ENCODE measurements at regions of chr5 and their contacts with region 1.

Region 1: GRCh38 chr5:55994574-55995333 is at the start of gene IL6ST:
- DNase-seq: peak; percentile 90 to 97 (median 95)
- ATAC-seq: peak; percentile 93
- H3K4me3 ChIP-seq: peak within 1 kb of the TSS; percentile 87 to 89
- H3K4me3 Mint-ChIP-seq: peak within 1 kb of the TSS; percentile 99
- H3K27ac ChIP-seq: peak within 1 kb of the TSS; percentile 93
- H3K27ac Mint-ChIP-seq: peak within 1 kb of the TSS; percentile 98
- H3K4me1 ChIP-seq: peaks cover 26% of the 10 kb centered on the region
- H3K4me1 Mint-ChIP-seq: peaks cover 54% of the 10 kb centered on the region
- H3K27me3 ChIP-seq: no peaks in the 10 kb centered on the region
- H3K27me3 Mint-ChIP-seq: no peaks in the 10 kb centered on the region
- CTCF ChIP-seq: no peak
- total RNA-seq, gene IL6ST: 201 to 214 TPM

Region 2: DNA sequence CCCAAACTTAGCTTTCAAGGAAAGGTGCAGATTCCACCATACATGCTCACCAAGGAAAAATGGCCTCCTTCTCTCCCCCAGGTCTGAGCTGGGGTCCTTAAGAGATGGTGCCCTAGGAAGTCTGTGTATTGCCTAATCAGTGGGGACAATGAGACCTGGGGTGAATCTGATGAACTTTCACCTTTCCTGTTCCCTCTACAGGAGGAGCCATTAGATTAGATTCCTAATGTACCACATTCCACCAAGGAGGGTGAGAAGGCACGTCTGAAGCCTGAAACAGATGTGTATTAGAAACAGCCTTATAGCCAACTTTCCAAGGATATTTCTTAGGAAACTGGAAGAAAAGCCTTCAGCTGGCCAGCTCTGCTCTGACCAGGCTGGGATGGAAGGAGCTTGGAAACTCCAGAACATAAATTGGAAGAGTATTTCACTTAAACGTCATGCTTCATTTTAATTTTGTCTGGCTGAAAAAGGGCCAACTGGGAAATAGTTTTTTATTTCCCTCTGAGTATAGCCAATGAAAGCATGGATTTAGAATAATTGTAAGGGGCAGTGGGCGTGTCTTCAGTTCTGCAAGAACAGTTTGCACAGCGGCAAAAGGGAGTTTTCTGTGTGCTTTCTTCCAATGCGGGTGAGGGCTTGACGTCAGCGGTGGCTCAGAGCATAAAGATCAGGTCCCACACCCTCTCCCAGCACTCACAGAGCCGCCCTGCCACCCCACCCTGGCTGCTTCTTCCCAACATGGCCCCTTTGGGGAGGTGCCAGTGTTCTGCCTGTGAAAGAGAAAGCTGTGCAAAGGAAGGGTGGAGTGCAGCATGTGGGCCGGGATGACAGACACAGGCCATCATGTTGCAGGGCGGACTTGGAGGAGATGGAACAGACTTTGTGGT is 1220.2 kb before region 1 on chr5:
- CTCF ChIA-PET with region 1: no interaction called
- POLR2A ChIA-PET with region 1: no interaction called
- intact Hi-C with region 1: no loop called
- DNase-seq: no peak
- ATAC-seq: no peak
- H3K4me3 ChIP-seq: no peak overlapping the region
- H3K4me3 Mint-ChIP-seq: no peak overlapping the region
- H3K27ac ChIP-seq: no peak overlapping the region
- H3K27ac Mint-ChIP-seq: no peak overlapping the region
- H3K4me1 ChIP-seq: no peaks in the 10 kb centered on the region
- H3K4me1 Mint-ChIP-seq: no peaks in the 10 kb centered on the region
- H3K27me3 ChIP-seq: no peaks in the 10 kb centered on the region
- H3K27me3 Mint-ChIP-seq: peaks cover 5% of the 10 kb centered on the region
- CTCF ChIP-seq: no peak

Region 3: GRCh38 chr5:55052383-55052931 is 942.3 kb before region 1 on chr5:
- CTCF ChIA-PET with region 1: no interaction called
- POLR2A ChIA-PET with region 1: no interaction called
- intact Hi-C with region 1: no loop called
- DNase-seq: no peak
- ATAC-seq: no peak
- H3K4me3 ChIP-seq: no peak overlapping the region
- H3K4me3 Mint-ChIP-seq: no peak overlapping the region
- H3K27ac ChIP-seq: no peak overlapping the region
- H3K27ac Mint-ChIP-seq: no peak overlapping the region
- H3K4me1 ChIP-seq: no peaks in the 10 kb centered on the region
- H3K4me1 Mint-ChIP-seq: no peaks in the 10 kb centered on the region
- H3K27me3 ChIP-seq: no peaks in the 10 kb centered on the region
- H3K27me3 Mint-ChIP-seq: no peaks in the 10 kb centered on the region
- CTCF ChIP-seq: no peak

Region 4: DNA sequence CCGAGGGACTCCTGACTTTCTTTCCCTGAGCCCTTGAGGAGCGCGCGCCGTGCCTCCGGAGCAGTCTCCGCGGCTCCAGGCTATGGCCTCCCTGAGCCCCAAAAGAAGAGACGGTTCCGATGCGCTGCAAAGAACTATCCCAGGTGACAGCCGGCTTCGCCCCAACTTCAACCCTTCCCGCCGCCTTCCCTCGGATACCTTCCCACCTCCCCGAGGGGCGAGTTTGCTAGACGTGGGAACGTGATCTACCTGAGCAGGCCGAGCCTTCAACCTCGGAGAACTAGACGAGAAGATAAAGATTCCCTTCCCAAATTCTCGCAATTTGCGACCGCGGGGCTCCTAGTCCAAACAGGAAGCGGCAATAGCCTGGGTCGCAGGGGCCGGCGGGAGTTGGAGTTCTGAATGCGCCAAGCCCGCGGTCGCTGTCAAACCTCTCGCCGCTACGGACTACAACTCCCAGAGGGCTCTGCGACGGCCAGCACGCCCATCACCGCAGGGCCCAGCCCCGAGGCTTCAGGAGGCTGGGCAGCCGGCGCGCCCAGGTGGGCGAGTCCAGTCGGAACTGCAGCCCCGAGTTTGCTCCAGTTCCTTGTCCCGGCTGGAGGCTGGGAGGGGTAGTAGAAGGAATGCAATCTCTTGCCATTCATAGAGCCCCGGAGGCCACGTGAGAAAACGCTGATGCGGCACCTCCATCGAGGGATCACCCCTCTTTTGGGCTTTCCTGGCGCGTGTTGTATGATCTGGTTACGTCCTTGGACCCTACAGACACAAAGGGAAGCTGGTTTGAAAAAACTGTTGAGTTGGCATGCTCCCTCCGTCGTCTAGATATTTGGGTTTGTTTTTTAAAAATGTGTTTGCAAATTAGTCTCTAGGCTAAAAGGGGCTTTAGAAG is 282.5 kb before region 1 on chr5 and contains the start of gene SLC38A9:
- CTCF ChIA-PET with region 1: no interaction called
- POLR2A ChIA-PET with region 1: no interaction called
- intact Hi-C with region 1: loop called in 1 of 2 experiments (anchors 1 kb)
- DNase-seq: peak; percentile 83 to 94 (median 91)
- ATAC-seq: peak; percentile 99
- H3K4me3 ChIP-seq: peak within 1 kb of the TSS; percentile 92 to 100
- H3K4me3 Mint-ChIP-seq: peak within 1 kb of the TSS; percentile 98
- H3K27ac ChIP-seq: peak within 1 kb of the TSS; percentile 54 to 73
- H3K27ac Mint-ChIP-seq: peak within 1 kb of the TSS; percentile 88
- H3K4me1 ChIP-seq: peaks cover 9% of the 10 kb centered on the region
- H3K4me1 Mint-ChIP-seq: peaks cover 31% of the 10 kb centered on the region
- H3K27me3 ChIP-seq: no peaks in the 10 kb centered on the region
- H3K27me3 Mint-ChIP-seq: peaks cover 3% of the 10 kb centered on the region
- CTCF ChIP-seq: no peak
- total RNA-seq, gene SLC38A9: 6.0 to 6.8 TPM

Region 5: GRCh38 chr5:55903121-55903701 is 91.5 kb before region 1 on chr5:
- CTCF ChIA-PET with region 1: no interaction called
- POLR2A ChIA-PET with region 1: no interaction called
- intact Hi-C with region 1: no loop called
- DNase-seq: peak; percentile 32 to 79 (median 57)
- ATAC-seq: peak; percentile 81
- H3K4me3 ChIP-seq: no peak overlapping the region
- H3K4me3 Mint-ChIP-seq: no peak overlapping the region
- H3K27ac ChIP-seq: no peak overlapping the region
- H3K27ac Mint-ChIP-seq: no peak overlapping the region
- H3K4me1 ChIP-seq: peaks cover 14% of the 10 kb centered on the region
- H3K4me1 Mint-ChIP-seq: peaks cover 14% of the 10 kb centered on the region
- H3K27me3 ChIP-seq: no peaks in the 10 kb centered on the region
- H3K27me3 Mint-ChIP-seq: peaks cover 2% of the 10 kb centered on the region
- CTCF ChIP-seq: no peak

Region 6: DNA sequence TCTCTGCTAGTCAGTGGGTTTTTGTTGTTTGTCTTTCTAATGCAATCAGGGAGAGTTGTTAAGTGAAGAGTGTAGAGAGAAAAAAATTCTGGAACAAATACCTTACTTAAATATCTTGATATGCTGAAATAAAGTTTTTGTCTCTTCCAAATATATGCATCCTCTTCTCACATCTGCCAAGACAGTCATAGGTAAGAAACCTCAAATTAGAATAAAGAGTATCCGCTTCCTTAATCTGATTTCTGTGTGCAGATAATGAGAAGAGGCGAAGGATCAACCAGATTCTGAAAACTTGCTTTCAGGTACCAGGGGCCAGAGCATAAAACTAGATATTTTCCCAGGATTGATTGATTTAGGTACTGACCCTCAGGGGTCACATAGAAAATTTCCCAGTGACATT is 11.3 kb after region 1 on chr5:
- CTCF ChIA-PET with region 1: interaction called, 4 read pairs
- POLR2A ChIA-PET with region 1: interaction called, 4 read pairs
- intact Hi-C with region 1: loop called (anchors 1 to 2 kb)
- DNase-seq: no peak
- ATAC-seq: no peak
- H3K4me3 ChIP-seq: no peak overlapping the region
- H3K4me3 Mint-ChIP-seq: no peak overlapping the region
- H3K27ac ChIP-seq: no peak overlapping the region
- H3K27ac Mint-ChIP-seq: no peak overlapping the region
- H3K4me1 ChIP-seq: peaks cover 13% of the 10 kb centered on the region
- H3K4me1 Mint-ChIP-seq: peaks cover 21% of the 10 kb centered on the region
- H3K27me3 ChIP-seq: no peaks in the 10 kb centered on the region
- H3K27me3 Mint-ChIP-seq: no peaks in the 10 kb centered on the region
- CTCF ChIP-seq: no peak

Region 7: GRCh38 chr5:56050551-56051255 is 55.9 kb after region 1 on chr5:
- CTCF ChIA-PET with region 1: interaction called, 4 read pairs
- POLR2A ChIA-PET with region 1: interaction called, 5 read pairs
- intact Hi-C with region 1: loop called in 1 of 2 experiments (anchors 2 kb)
- DNase-seq: peak in 1 of 9 experiments; percentile 42
- ATAC-seq: peak; percentile 52
- H3K4me3 ChIP-seq: peak overlapping the region in 1 of 2 experiments; percentile 11
- H3K4me3 Mint-ChIP-seq: peak overlapping the region; percentile 68
- H3K27ac ChIP-seq: peak overlapping the region; percentile 2 to 32
- H3K27ac Mint-ChIP-seq: peak overlapping the region; percentile 83
- H3K4me1 ChIP-seq: peaks cover 67% of the 10 kb centered on the region
- H3K4me1 Mint-ChIP-seq: peaks cover 66% of the 10 kb centered on the region
- H3K27me3 ChIP-seq: no peaks in the 10 kb centered on the region
- H3K27me3 Mint-ChIP-seq: no peaks in the 10 kb centered on the region
- CTCF ChIP-seq: no peak

Region 8: GRCh38 chr5:56155992-56156584 is 161.3 kb after region 1 on chr5:
- CTCF ChIA-PET with region 1: no interaction called
- POLR2A ChIA-PET with region 1: no interaction called
- intact Hi-C with region 1: loop called (anchors 5 kb)
- DNase-seq: peak in 1 of 9 experiments; percentile 41
- ATAC-seq: no peak
- H3K4me3 ChIP-seq: no peak overlapping the region
- H3K4me3 Mint-ChIP-seq: no peak overlapping the region
- H3K27ac ChIP-seq: peak overlapping the region; percentile 8 to 39
- H3K27ac Mint-ChIP-seq: peak overlapping the region; percentile 91
- H3K4me1 ChIP-seq: peaks cover 55% of the 10 kb centered on the region
- H3K4me1 Mint-ChIP-seq: peaks cover 66% of the 10 kb centered on the region
- H3K27me3 ChIP-seq: no peaks in the 10 kb centered on the region
- H3K27me3 Mint-ChIP-seq: no peaks in the 10 kb centered on the region
- CTCF ChIP-seq: no peak

Region 9: GRCh38 chr5:56951946-56952691 is 957.4 kb after region 1 on chr5 and contains the start of gene MIER3:
- CTCF ChIA-PET with region 1: no interaction called
- POLR2A ChIA-PET with region 1: no interaction called
- intact Hi-C with region 1: loop called (anchors 1 to 10 kb)
- DNase-seq: peak; percentile 50 to 86 (median 78)
- ATAC-seq: peak; percentile 92
- H3K4me3 ChIP-seq: peak within 1 kb of the TSS; percentile 66 to 69
- H3K4me3 Mint-ChIP-seq: peak within 1 kb of the TSS; percentile 95
- H3K27ac ChIP-seq: peak within 1 kb of the TSS; percentile 37 to 40
- H3K27ac Mint-ChIP-seq: peak within 1 kb of the TSS; percentile 87
- H3K4me1 ChIP-seq: peaks cover 16% of the 10 kb centered on the region
- H3K4me1 Mint-ChIP-seq: peaks cover 23% of the 10 kb centered on the region
- H3K27me3 ChIP-seq: no peaks in the 10 kb centered on the region
- H3K27me3 Mint-ChIP-seq: peaks cover 14% of the 10 kb centered on the region
- CTCF ChIP-seq: no peak
- total RNA-seq, gene MIER3: 29.3 to 39.2 TPM